CD4-positive, alpha-beta memory T cell (primary cell): ENCODE measurements at regions of chr6 and their contacts with region 1.

Region 1: GRCh38 chr6:145633981-145634627 is 101.2 kb downstream of the EPM2A start:
- DNase-seq: peak; percentile 52 to 64 (median 61)
- H3K4me3 ChIP-seq: no peak overlapping the region
- H3K4me3 Mint-ChIP-seq: no peak overlapping the region
- H3K27ac ChIP-seq: no peak overlapping the region
- H3K27ac Mint-ChIP-seq: no peak overlapping the region
- H3K4me1 ChIP-seq: no peaks in the 10 kb centered on the region
- H3K4me1 Mint-ChIP-seq: peaks cover 1 to 8% (median 4%) of the 10 kb centered on the region in 4 donors
- H3K27me3 ChIP-seq: no peaks in the 10 kb centered on the region
- H3K27me3 Mint-ChIP-seq: no peaks in the 10 kb centered on the region

Region 2: DNA sequence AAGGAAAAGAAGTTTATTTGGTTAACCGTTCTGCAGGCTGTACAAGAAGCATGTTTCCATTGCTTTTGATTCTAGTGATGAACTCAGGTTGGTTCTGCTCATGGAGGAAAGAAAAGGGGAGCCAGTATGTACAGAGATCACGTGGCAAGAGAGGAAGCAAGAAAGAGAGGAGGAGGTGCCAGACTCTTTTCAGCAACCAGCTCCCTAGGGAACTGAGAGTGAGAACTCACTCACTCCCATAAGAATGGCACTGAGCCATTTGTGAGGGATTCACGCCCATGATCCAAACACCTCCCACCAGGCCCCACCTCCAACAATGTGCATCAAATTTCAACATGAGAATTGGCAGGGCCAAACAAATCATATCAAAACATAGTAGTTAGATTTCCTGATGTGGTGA is 547.9 kb before region 1 on chr6:
- CTCF ChIA-PET with region 1: no interaction called
- POLR2A ChIA-PET with region 1: no interaction called
- intact Hi-C with region 1: no loop called
- DNase-seq: no peak
- H3K4me3 ChIP-seq: no peak overlapping the region
- H3K4me3 Mint-ChIP-seq: no peak overlapping the region
- H3K27ac ChIP-seq: no peak overlapping the region
- H3K27ac Mint-ChIP-seq: no peak overlapping the region
- H3K4me1 ChIP-seq: no peaks in the 10 kb centered on the region
- H3K4me1 Mint-ChIP-seq: no peaks in the 10 kb centered on the region
- H3K27me3 ChIP-seq: no peaks in the 10 kb centered on the region
- H3K27me3 Mint-ChIP-seq: peaks cover 2 to 3% of the 10 kb centered on the region in 2 donors

Region 3: DNA sequence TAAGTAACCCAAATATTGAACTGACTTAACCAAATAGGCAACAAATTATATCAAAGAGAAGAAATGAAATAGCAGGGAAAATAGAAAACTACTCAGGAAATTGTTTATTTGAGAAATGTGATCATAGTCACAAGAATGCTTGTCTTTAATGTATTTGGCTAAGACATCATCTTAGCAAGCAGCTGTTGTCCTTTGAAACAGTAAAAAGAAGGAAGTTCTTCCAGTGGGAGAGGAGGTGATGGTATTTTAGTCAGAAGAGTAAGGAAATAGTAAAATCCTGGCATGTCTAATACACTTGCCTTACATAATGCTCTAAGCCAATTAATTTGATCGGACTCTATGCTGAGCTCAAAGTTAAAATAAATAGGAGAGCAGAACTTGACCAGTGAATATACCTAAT is 25.3 kb before region 1 on chr6:
- CTCF ChIA-PET with region 1: interaction called, 41 read pairs
- POLR2A ChIA-PET with region 1: no interaction called
- intact Hi-C with region 1: no loop called
- DNase-seq: no peak
- H3K4me3 ChIP-seq: no peak overlapping the region
- H3K4me3 Mint-ChIP-seq: no peak overlapping the region
- H3K27ac ChIP-seq: no peak overlapping the region
- H3K27ac Mint-ChIP-seq: no peak overlapping the region
- H3K4me1 ChIP-seq: no peaks in the 10 kb centered on the region
- H3K4me1 Mint-ChIP-seq: no peaks in the 10 kb centered on the region
- H3K27me3 ChIP-seq: no peaks in the 10 kb centered on the region
- H3K27me3 Mint-ChIP-seq: peaks cover 3 to 7% of the 10 kb centered on the region in 2 donors

Region 4: GRCh38 chr6:145660676-145661075 is 26.6 kb after region 1 on chr6:
- CTCF ChIA-PET with region 1: interaction called, 18 read pairs
- POLR2A ChIA-PET with region 1: no interaction called
- intact Hi-C with region 1: no loop called
- DNase-seq: no peak
- H3K4me3 ChIP-seq: no peak overlapping the region
- H3K4me3 Mint-ChIP-seq: no peak overlapping the region
- H3K27ac ChIP-seq: no peak overlapping the region
- H3K27ac Mint-ChIP-seq: no peak overlapping the region
- H3K4me1 ChIP-seq: no peaks in the 10 kb centered on the region
- H3K4me1 Mint-ChIP-seq: no peaks in the 10 kb centered on the region
- H3K27me3 ChIP-seq: no peaks in the 10 kb centered on the region
- H3K27me3 Mint-ChIP-seq: no peaks in the 10 kb centered on the region

Region 5: DNA sequence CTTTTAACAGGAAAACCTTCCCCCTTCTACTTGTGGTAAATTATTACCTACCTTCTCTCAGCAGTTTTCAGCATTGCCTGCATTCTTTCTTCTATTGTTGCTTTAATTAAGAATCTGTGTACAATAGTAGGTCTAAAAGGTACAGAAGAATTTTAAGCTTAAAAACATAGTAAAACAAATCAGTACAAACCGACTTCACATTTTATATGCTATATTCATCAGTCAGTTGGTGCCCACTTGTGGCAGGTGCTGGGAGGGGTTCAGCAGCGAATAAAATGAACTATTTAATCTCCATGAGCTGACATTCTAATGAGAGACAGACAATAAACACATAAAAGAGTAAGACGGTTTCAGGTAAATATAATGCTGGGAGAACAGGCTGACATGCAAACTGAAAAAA is 253.9 kb after region 1 on chr6:
- CTCF ChIA-PET with region 1: interaction called, 19 read pairs
- POLR2A ChIA-PET with region 1: no interaction called
- intact Hi-C with region 1: loop called (anchors 10 kb)
- DNase-seq: peak in 2 of 5 donors; percentile 9 to 17
- H3K4me3 ChIP-seq: no peak overlapping the region
- H3K4me3 Mint-ChIP-seq: no peak overlapping the region
- H3K27ac ChIP-seq: no peak overlapping the region
- H3K27ac Mint-ChIP-seq: no peak overlapping the region
- H3K4me1 ChIP-seq: no peaks in the 10 kb centered on the region
- H3K4me1 Mint-ChIP-seq: no peaks in the 10 kb centered on the region
- H3K27me3 ChIP-seq: no peaks in the 10 kb centered on the region
- H3K27me3 Mint-ChIP-seq: no peaks in the 10 kb centered on the region